Endothelial cell of umbilical vein (primary cell): ENCODE measurements at regions of chr11 and their contacts with region 1.

Region 1: DNA sequence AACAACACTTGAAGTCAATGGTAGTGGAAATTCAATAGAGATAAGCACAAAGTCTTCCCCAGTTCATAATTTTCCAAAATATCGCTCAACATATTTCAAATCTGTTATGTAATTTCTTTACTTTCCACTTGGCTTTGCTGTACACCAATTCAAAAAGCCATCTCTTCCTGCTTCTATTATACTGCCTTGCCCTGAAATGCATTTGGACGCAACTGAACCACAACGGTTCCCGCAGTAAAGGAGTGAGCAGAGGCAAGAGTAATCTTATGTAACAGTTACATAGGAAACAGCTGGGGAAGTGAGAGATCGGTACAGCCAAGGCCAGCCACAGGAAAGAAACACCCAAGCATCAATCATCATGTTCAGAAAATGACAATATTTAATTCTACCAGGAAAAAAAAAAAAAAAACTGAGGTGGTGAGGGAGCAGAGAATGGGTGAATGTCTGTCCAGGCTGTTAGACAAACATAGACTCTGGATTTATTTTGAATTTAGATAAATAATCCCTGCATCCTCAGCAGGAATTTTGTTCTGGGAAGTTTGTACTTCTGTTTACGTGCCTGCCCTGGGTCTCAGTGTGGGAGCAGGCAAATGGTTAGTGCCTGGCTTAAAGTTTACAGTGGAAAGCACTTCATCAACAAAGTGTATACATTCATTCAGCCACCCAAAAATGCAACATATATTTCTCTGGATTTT is 392.2 kb downstream of the ETS1 start:
- DNase-seq: peak; percentile 98
- H3K4me3 ChIP-seq: no peak overlapping the region
- H3K27ac ChIP-seq: peak overlapping the region; percentile 65
- H3K4me1 ChIP-seq: peaks cover 12% of the 10 kb centered on the region
- H3K27me3 ChIP-seq: no peaks in the 10 kb centered on the region
- CTCF ChIP-seq: peak in 1 of 2 donors; percentile 9
- POLR2A ChIP-seq: peak; percentile 60

Region 2: DNA sequence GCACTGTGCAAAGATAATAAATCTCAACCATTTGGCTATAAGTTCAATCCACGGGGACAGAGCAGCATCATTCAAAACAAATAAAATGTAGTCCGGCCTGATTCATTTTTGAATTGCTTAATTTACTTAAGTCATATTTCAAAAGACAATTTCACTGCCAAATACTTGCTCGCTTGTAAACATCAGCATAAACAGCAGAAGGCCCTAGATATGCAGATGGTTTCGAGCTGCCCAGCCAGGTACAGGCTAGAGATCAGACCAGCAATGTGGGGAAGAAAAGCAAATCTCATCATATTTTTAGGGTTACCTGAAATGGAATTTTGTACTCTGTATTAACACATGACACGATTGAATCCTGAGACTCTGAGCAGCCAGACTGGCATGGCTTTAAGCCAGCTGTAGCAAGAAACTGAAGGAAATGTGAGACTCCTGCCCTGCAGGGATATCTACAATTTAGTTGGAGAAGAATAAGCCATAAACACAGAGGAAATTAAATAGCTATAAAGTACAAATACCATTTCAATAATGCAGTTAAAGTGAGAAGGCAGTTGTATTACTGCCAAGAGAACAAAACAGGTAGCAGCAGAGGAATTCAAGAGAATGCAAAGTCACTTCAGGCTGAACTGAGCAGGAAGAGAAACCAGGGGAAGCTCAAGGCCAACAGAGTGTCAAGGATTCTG is 48.1 kb before region 1 on chr11:
- CTCF ChIA-PET with region 1: no interaction called
- POLR2A ChIA-PET with region 1: no interaction called
- dilution Hi-C with region 1: no loop called
- intact Hi-C with region 1: no loop called
- DNase-seq: peak; percentile 50
- H3K4me3 ChIP-seq: no peak overlapping the region
- H3K27ac ChIP-seq: no peak overlapping the region
- H3K4me1 ChIP-seq: no peaks in the 10 kb centered on the region
- H3K27me3 ChIP-seq: no peaks in the 10 kb centered on the region
- CTCF ChIP-seq: no peak
- POLR2A ChIP-seq: no peak

Region 3: DNA sequence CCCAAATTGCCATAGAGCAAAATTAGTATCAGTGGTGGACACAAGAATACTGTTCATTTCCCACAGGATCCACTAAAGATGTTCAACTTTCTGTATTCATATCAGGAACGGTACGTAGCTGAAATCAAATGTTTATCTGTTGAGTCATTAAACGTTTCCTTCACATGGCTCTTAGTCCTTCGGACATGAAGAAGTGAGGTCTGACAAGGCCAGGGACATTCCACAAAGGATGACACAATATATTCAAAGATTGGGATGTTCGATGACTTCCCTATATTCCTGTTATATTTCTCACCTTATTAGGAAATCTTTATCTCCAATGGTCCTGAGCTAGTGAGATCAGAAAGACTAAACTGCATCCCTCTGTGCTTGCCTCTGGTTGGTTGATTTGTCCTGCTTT is 263.1 kb after region 1 on chr11:
- CTCF ChIA-PET with region 1: no interaction called
- POLR2A ChIA-PET with region 1: no interaction called
- dilution Hi-C with region 1: no loop called
- intact Hi-C with region 1: loop called (anchors 5 kb)
- DNase-seq: peak; percentile 62
- H3K4me3 ChIP-seq: no peak overlapping the region
- H3K27ac ChIP-seq: peak overlapping the region; percentile 61
- H3K4me1 ChIP-seq: peaks cover 11% of the 10 kb centered on the region
- H3K27me3 ChIP-seq: no peaks in the 10 kb centered on the region
- CTCF ChIP-seq: no peak
- POLR2A ChIP-seq: no peak

Region 4: GRCh38 chr11:128472128-128473089 is 277.2 kb after region 1 on chr11:
- CTCF ChIA-PET with region 1: no interaction called
- POLR2A ChIA-PET with region 1: no interaction called
- dilution Hi-C with region 1: no loop called
- intact Hi-C with region 1: loop called (anchors 5 kb)
- DNase-seq: peak; percentile 45
- H3K4me3 ChIP-seq: no peak overlapping the region
- H3K27ac ChIP-seq: no peak overlapping the region
- H3K4me1 ChIP-seq: peaks cover 22% of the 10 kb centered on the region
- H3K27me3 ChIP-seq: no peaks in the 10 kb centered on the region
- CTCF ChIP-seq: no peak
- POLR2A ChIP-seq: no peak

Region 5: DNA sequence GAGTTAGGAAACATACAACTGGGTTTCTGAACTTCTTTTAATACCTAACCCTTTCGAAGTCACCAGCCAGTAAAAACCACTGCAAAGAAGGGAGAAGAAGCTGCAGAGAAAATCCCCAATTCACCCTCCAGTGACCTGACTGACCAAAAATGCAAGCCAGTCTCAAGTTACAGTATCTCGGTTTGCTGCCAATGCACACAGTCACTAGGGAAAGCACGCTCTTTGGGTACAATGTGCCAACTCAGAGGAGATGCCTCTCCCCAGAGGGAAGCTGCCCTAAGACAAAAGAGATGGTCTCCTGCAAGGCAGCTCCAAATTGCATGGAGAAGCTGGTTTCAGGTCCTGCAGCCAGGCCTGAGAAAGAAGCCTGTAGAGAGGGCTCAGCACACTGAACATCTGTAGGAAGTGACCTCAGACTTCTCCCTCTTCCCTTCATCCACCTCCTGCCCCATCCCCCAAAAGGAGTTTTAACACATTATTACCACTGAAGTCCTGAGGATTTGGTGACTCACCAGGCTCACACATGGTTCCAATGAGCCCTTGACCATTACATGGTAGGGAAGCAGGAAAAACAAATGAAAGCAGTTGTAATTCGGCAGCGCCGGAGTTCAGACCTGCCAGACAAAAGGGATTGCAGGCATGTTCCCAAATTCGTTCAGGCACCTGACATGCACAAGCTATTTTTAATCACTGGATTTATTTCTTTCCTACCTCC is 302.0 kb after region 1 on chr11:
- CTCF ChIA-PET with region 1: no interaction called
- POLR2A ChIA-PET with region 1: no interaction called
- dilution Hi-C with region 1: no loop called
- intact Hi-C with region 1: loop called (anchors 1 kb)
- DNase-seq: peak; percentile 96
- H3K4me3 ChIP-seq: peak overlapping the region in 1 of 3 experiments; percentile 28
- H3K27ac ChIP-seq: peak overlapping the region; percentile 94
- H3K4me1 ChIP-seq: peaks cover 67% of the 10 kb centered on the region
- H3K27me3 ChIP-seq: no peaks in the 10 kb centered on the region
- CTCF ChIP-seq: no peak
- POLR2A ChIP-seq: no peak